ENCODE measurements at regions of chrX and their contacts with region 1.

Region 1: GRCh38 chrX:16826207-16826606 is 39.9 kb downstream of the TXLNG start:
- DNase-seq: peak; percentile 50
- H3K4me3 ChIP-seq: no peak overlapping the region
- H3K27ac ChIP-seq: peak overlapping the region; percentile 25
- H3K4me1 ChIP-seq: peaks cover 38% of the 10 kb centered on the region
- H3K27me3 ChIP-seq: no peaks in the 10 kb centered on the region
- CTCF ChIP-seq: peak; percentile 12 to 27
- POLR2A ChIP-seq: no peak

Region 2: DNA sequence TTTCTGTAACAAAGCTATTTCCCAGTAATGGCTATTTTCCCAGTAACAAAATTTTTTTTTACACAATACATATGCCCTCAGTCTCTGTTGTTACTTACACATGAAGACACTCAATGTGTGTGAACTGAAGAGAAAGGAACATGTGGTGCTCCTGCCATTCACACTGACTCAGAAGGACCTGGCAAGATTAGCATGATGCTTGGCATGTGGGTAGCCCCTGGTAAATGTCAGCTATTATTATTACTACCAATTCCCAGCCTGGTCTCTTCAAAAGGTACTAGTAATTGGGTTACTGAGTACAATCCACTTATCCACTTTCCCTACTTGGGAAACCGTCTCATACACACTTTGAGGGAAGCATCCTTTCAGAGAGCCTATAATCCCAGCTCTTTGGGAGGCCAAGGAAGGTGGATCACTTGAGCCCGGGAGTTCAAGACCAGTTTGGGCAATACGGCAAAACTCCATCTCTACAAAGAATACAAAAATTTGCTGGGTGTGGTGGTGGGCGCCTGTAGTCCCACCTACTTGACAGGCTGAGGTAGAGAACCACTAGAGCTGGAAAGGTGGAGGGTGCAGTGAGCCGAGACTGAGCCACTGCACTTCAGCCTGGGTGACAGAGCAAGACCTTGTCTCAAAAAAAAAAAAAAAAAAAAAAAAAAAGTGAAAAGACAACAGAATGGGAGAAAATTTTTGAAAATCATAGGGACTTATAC is 29.3 kb after region 1 on chrX:
- CTCF ChIA-PET with region 1: no interaction called
- POLR2A ChIA-PET with region 1: no interaction called
- dilution Hi-C with region 1: no loop called
- intact Hi-C with region 1: no loop called
- DNase-seq: no peak
- H3K4me3 ChIP-seq: no peak overlapping the region
- H3K27ac ChIP-seq: no peak overlapping the region
- H3K4me1 ChIP-seq: no peaks in the 10 kb centered on the region
- H3K27me3 ChIP-seq: no peaks in the 10 kb centered on the region
- CTCF ChIP-seq: no peak
- POLR2A ChIP-seq: no peak

Region 3: DNA sequence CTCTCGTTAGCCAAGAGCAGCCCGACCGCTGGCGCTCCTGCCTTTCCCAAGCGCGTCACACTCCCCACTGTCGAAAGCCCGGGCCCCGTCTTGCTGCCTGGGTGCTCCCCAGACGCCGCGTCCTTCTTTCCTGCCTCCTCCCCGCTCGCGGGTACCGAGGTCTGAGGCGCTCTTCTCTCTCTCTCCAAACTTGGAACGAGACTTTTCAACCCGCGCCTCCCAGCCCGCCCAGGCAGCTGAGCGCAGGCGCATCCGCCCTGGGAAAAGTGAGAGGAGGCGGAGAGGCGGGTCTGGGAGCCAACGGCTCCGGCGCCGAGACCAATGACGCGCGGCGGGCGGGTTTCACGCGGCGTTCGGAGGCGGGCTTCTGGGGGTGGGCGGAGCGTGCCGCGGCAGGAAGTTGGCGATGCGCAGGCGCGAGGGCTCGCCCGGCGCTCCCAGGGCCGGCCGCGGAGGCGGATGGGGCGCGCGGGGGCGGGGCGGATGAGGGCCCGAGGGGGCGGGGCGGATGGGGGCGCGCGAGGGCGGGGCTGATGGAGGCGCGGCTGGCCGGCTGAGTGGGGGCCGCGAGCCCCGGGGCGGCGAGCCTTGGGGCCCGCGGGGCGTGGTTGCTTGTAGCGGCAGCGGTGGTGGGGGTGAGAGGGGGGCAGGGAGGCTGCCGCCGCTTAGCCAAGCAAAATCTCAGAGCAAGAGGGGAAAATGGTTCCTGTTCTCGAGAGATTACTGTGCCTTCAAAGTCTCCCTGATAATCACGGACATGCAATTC is 44.1 kb after region 1 on chrX and contains the start of gene RBBP7:
- CTCF ChIA-PET with region 1: interaction called, 3 read pairs
- POLR2A ChIA-PET with region 1: no interaction called
- dilution Hi-C with region 1: no loop called
- intact Hi-C with region 1: loop called (anchors 2 kb)
- DNase-seq: peak; percentile 89
- H3K4me3 ChIP-seq: peak within 1 kb of the TSS; percentile 69 to 89 (median 86)
- H3K27ac ChIP-seq: peak within 1 kb of the TSS; percentile 81
- H3K4me1 ChIP-seq: peaks cover 17% of the 10 kb centered on the region
- H3K27me3 ChIP-seq: no peaks in the 10 kb centered on the region
- CTCF ChIP-seq: no peak
- POLR2A ChIP-seq: no peak
- total RNA-seq, gene RBBP7: 129 and 130 TPM in 2 replicates

Region 4: GRCh38 chrX:16892504-16893362 is 66.5 kb after region 1 on chrX:
- CTCF ChIA-PET with region 1: interaction called, 11 read pairs
- POLR2A ChIA-PET with region 1: no interaction called
- dilution Hi-C with region 1: no loop called
- intact Hi-C with region 1: loop called (anchors 1 kb)
- DNase-seq: peak; percentile 70
- H3K4me3 ChIP-seq: no peak overlapping the region
- H3K27ac ChIP-seq: no peak overlapping the region
- H3K4me1 ChIP-seq: no peaks in the 10 kb centered on the region
- H3K27me3 ChIP-seq: no peaks in the 10 kb centered on the region
- CTCF ChIP-seq: peak; percentile 67 to 76
- POLR2A ChIP-seq: no peak

Region 5: DNA sequence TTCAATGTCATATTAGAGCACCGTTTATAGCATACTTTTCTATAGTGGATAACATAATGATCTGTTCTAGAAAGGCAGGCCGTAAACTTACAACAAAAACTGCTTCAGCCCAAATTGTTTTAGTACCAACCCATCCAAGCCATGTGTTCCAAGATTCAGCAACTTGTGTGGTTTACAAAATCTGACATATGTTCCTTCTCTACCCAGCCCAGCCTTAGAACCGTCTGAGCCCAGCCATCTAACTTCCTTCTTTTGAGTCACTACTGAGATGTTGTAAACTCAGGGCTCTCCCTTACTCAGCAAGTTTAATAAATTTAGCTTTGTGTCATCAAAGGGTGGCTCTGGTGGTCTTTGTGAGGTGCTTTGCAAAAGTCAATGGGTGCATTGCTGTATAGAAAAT is 87.9 kb after region 1 on chrX:
- CTCF ChIA-PET with region 1: no interaction called
- POLR2A ChIA-PET with region 1: no interaction called
- dilution Hi-C with region 1: no loop called
- intact Hi-C with region 1: no loop called
- DNase-seq: no peak
- H3K4me3 ChIP-seq: no peak overlapping the region
- H3K27ac ChIP-seq: no peak overlapping the region
- H3K4me1 ChIP-seq: no peaks in the 10 kb centered on the region
- H3K27me3 ChIP-seq: no peaks in the 10 kb centered on the region
- CTCF ChIP-seq: no peak
- POLR2A ChIP-seq: no peak

Region 6: GRCh38 chrX:17046478-17047097 is 220.4 kb after region 1 on chrX:
- CTCF ChIA-PET with region 1: interaction called, 133 read pairs
- POLR2A ChIA-PET with region 1: no interaction called
- dilution Hi-C with region 1: no loop called
- intact Hi-C with region 1: loop called (anchors 1 kb)
- DNase-seq: peak; percentile 62
- H3K4me3 ChIP-seq: no peak overlapping the region
- H3K27ac ChIP-seq: no peak overlapping the region
- H3K4me1 ChIP-seq: no peaks in the 10 kb centered on the region
- H3K27me3 ChIP-seq: no peaks in the 10 kb centered on the region
- CTCF ChIP-seq: peak; percentile 50 to 65
- POLR2A ChIP-seq: no peak

Region 7: GRCh38 chrX:17242470-17242869 is 416.3 kb after region 1 on chrX:
- CTCF ChIA-PET with region 1: interaction called, 14 read pairs
- POLR2A ChIA-PET with region 1: no interaction called
- dilution Hi-C with region 1: no loop called
- intact Hi-C with region 1: no loop called
- DNase-seq: peak; percentile 62
- H3K4me3 ChIP-seq: no peak overlapping the region
- H3K27ac ChIP-seq: no peak overlapping the region
- H3K4me1 ChIP-seq: no peaks in the 10 kb centered on the region
- H3K27me3 ChIP-seq: no peaks in the 10 kb centered on the region
- CTCF ChIP-seq: peak; percentile 36
- POLR2A ChIP-seq: no peak